Ovary (tissue), 10 donors: ENCODE measurements at regions of chr19 and their contacts with region 1.

Region 1: DNA sequence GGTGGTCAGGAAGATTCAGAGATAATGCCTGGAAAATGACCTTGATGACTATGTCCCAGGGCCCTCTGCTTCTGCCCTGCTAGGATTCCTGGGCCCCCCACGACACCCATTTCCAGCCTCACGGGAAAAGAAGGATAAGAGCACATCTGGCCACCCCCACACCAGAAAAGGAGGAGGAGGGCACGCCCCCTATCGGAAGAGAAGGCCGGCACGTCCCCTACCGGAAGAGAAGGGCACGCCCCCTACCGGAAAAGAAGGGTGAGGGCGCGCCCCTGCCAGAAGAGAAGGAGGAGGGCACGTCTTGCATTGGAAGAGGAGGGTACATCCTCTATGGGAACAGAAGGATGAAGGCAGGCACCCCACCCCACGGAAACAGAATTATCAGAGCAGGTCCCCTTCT is 84.3 kb downstream of the IER2 start:
- DNase-seq: peak in 2 of 5 donors; percentile 23 to 50
- H3K4me3 ChIP-seq: no peak overlapping the region
- H3K27ac ChIP-seq: no peak overlapping the region
- H3K4me1 ChIP-seq: no peaks in the 10 kb centered on the region
- H3K27me3 ChIP-seq: no peaks in the 10 kb centered on the region
- CTCF ChIP-seq: no peak
- EP300 ChIP-seq: no peak
- POLR2A ChIP-seq: no peak

Region 2: DNA sequence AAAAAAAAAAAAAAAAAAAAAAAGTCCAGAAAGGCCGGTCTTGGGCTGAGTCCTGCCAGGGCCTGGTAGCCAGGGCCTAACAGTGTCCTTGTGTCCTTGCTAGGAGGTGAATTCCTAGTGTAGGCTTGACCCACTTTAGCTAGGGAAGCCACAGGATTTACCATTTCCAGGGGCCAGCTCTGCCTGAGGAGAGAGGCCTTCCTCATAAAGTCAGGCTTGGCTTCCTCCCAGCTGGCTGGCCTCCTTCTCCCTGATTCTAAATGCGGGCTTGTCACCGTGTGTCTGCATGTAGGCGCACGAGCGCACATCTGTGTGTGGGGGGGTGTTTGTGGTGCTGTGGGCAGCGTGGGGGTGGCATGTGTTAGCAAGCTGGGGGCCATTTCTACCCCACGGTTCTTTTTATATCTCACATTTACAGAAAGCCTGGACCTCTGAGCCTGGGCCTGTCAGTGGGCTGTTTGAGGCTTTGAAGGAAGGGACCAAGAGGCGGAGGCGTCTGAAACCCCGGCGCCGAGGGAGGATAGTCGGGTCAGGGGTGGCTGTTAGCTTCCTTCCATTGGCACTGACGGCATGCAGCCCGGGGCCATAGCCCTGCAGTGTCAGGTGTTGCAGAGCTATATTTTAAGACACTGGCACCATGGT is 52.6 kb before region 1 on chr19:
- intact Hi-C with region 1: loop called in 1 of 4 experiments (anchors 10 kb)
- DNase-seq: peak; percentile 39 to 73 (median 48)
- H3K4me3 ChIP-seq: no peak overlapping the region
- H3K27ac ChIP-seq: no peak overlapping the region
- H3K4me1 ChIP-seq: peaks cover 3% of the 10 kb centered on the region
- H3K27me3 ChIP-seq: no peaks in the 10 kb centered on the region
- CTCF ChIP-seq: no peak
- EP300 ChIP-seq: no peak
- POLR2A ChIP-seq: no peak